ENCODE measurements at regions of chr1 and their contacts with region 1.

Region 1: DNA sequence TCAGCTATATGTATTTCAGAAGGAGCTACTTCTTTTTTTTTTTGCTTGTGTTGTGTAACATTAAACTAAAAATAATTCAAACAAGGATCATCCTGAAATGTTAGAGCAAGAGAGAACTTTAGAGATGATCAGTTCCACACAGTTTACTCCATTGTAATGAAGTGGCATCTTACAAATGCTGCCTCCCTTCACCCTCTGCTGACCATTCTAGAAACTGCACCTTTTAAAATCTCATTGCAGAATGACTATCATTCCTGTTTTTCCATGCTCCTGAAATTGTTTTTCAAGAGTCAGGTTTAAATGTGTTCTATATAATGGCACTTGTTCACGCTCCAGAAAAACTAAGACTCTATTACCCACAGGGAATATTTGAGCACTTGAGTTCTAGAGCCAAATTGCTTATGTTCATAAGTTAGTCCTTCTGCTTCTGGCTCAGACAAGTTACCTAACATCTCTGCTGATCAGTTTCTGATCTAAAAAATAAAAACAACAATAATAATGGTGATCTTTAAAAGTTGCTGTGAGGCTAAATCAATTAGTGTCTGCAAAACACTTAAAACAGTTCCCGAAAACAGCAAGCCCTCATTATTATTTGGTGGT is 21.5 kb upstream of the SLC44A5 start:
- DNase-seq: no peak
- H3K4me3 Mint-ChIP-seq: no peak overlapping the region
- H3K27ac Mint-ChIP-seq: no peak overlapping the region
- H3K4me1 Mint-ChIP-seq: no peaks in the 10 kb centered on the region
- H3K27me3 Mint-ChIP-seq: peaks cover 12% of the 10 kb centered on the region

Region 2: GRCh38 chr1:75233302-75233929 is 399.0 kb before region 1 on chr1:
- CTCF ChIA-PET with region 1: interaction called, 7 read pairs
- POLR2A ChIA-PET with region 1: no interaction called
- intact Hi-C with region 1: loop called (anchors 1 kb)
- DNase-seq: no peak
- H3K4me3 Mint-ChIP-seq: no peak overlapping the region
- H3K27ac Mint-ChIP-seq: no peak overlapping the region
- H3K4me1 Mint-ChIP-seq: no peaks in the 10 kb centered on the region
- H3K27me3 Mint-ChIP-seq: no peaks in the 10 kb centered on the region

Region 3: DNA sequence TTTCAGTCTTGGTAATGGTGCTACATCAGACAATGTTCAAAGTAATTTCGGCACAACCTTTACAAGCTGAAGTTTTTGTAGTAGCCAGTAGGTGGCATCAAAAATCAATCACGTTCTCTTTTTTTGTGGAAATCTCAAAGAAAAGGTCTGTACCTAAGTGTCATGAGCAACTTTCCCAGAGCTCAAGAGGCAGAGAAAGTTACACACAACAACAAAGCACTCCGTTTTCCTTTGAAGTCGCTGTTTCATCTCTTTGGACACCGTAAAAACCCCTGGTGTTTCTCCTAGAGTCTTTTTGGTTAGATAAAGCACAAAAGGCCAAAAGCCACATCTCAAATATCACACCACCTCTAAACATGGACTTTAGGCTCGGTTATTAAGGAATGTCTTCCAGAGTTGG is 366.7 kb before region 1 on chr1:
- CTCF ChIA-PET with region 1: no interaction called
- POLR2A ChIA-PET with region 1: no interaction called
- intact Hi-C with region 1: loop called (anchors 1 kb)
- DNase-seq: no peak
- H3K4me3 Mint-ChIP-seq: no peak overlapping the region
- H3K27ac Mint-ChIP-seq: no peak overlapping the region
- H3K4me1 Mint-ChIP-seq: no peaks in the 10 kb centered on the region
- H3K27me3 Mint-ChIP-seq: no peaks in the 10 kb centered on the region

Region 4: DNA sequence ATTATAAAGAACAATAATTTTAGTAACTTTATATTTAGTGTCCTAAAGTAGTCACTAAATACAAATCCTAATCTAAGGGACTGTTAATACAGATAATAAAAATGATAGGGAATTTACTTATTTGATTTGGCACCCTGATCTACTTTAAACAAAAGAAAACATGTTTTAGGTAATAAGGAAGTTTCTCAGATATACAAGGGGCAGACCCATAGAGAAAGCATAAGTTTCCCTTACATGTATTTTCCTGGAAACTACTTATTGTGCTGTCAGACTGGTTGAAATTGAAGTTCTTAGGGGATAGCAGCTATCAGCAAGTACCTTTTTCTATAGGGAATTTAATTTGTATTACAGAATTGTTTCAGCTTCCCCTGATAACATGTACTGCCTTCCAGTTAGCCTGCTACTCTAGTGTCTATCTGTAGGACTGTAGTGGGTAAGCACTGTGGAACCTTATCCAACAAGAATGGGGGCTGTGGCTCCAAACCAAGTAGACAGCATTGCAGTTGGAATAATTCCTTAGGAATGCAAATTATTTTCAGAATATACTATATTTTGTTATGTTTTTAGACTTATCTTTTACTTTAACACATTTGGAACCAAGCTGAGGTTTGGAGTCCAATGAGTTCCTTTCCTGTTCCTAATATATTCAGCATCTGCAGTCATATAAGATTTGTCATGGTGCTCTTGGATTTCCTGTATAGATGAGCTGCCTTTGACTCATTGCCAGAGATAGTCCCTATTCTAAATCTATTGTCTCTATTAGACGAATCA is 178.9 kb after region 1 on chr1:
- CTCF ChIA-PET with region 1: no interaction called
- POLR2A ChIA-PET with region 1: no interaction called
- intact Hi-C with region 1: no loop called
- DNase-seq: no peak
- H3K4me3 Mint-ChIP-seq: no peak overlapping the region
- H3K27ac Mint-ChIP-seq: no peak overlapping the region
- H3K4me1 Mint-ChIP-seq: no peaks in the 10 kb centered on the region
- H3K27me3 Mint-ChIP-seq: no peaks in the 10 kb centered on the region